H1 (cell line): ENCODE measurements at regions of chr22 and their contacts with region 1.

Region 1: DNA sequence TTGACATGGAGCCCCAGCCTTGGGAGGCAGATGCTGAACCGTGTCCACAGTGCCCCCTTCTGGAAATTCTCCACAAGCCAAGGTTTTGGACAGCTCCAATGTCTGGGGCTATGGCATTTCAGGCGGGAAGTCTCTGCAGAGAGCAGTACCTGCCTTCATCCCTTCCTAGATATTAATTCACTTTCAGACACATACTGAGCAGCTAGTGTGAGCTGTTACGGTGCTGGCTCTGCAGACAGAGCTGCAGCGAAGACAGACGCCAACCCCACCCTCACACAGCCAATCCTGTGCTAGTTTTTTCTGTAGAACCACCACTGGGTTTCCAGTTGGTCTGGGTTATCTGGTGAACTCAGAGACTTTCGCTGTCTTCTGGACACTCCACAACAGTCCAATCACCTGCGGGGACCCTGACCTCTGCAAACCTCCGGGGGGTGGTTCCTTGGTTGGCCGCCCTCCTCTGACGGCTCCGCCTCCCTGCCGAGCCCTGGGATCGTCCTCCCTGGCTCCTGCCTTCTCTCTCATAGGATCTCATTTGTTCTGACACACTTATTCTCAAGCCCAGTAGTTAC is 9.1 kb downstream of the LMF2 start:
- DNase-seq: peak; percentile 56 to 87
- H3K4me3 ChIP-seq: no peak overlapping the region; a peak in 1 of 8 replicates
- H3K27ac ChIP-seq: no peak overlapping the region
- H3K4me1 ChIP-seq: peaks cover 0 to 3% (median 0%) of the 10 kb centered on the region in 4 experiments; a peak in 2 of 7 replicates
- H3K27me3 ChIP-seq: no peaks in the 10 kb centered on the region
- CTCF ChIP-seq: peak; percentile 73 to 93 (median 88)
- EP300 ChIP-seq: no peak
- POLR2A ChIP-seq: no peak
- RAD21 ChIP-seq: peak; percentile 84 to 86

Region 2: GRCh38 chr22:50456466-50457234 is 41.8 kb before region 1 on chr22:
- CTCF ChIA-PET with region 1: interaction called, 21 read pairs
- POLR2A ChIA-PET with region 1: interaction called, 3 read pairs
- DNase-seq: no peak
- H3K4me3 ChIP-seq: no peak overlapping the region
- H3K27ac ChIP-seq: no peak overlapping the region
- H3K4me1 ChIP-seq: no peaks in the 10 kb centered on the region
- H3K27me3 ChIP-seq: no peaks in the 10 kb centered on the region; a peak in 1 of 7 replicates
- CTCF ChIP-seq: peak; percentile 53 to 76 (median 63)
- EP300 ChIP-seq: no peak
- POLR2A ChIP-seq: no peak
- RAD21 ChIP-seq: peak; percentile 56 to 64

Region 3: DNA sequence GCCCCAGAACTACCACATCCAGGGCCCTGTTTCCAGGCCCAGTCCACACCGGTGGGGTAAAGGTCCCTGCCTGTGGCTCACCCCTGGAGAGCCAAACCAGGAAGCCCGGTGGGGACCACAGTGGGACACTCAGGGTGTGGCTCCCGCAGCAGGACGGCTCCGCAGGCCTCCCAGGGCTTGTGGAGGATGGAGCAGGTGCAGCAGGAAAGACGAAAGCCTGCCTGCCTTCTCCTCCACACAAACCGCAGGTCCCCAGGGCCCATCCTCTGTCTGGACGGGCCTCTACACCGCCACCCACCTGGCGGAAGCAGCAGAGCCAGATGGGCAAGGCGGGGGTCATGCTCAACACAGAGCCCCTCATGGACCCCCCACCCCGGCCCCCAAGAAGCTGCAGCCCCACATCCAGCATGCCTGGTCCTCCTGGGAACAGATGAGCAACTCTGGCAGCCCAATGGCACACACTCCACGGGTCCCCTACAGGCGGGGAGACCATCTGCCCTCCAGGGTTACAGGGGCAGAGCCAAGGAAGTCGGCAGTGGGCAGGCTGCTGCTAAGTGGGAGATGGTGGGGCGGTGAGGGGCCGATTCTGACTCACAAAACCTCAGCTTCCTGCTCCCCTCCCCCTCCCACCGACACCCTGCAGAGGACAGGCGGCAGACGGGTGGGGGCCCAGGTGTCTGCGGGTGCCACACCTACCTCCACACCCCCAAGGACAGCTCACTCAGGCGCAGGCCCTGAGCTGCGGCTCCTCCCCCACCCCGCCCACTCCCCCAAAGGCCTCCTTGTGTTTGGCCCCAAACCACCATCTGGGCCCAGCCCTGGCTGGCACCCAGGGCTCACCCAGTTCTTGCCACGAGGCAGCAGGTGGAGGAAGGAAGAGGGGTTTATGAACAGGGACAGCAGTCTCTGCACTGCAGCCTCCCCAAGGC is 28.8 kb before region 1 on chr22:
- CTCF ChIA-PET with region 1: interaction called, 43 read pairs
- POLR2A ChIA-PET with region 1: interaction called, 3 read pairs
- DNase-seq: peak in 1 of 2 experiments; percentile 57
- H3K4me3 ChIP-seq: no peak overlapping the region
- H3K27ac ChIP-seq: no peak overlapping the region; the same call in 1 of the 2 replicates
- H3K4me1 ChIP-seq: peaks cover 0 to 22% (median 13%) of the 10 kb centered on the region in 4 experiments; a peak in 6 of 7 replicates
- H3K27me3 ChIP-seq: no peaks in the 10 kb centered on the region; a peak in 1 of 7 replicates
- CTCF ChIP-seq: no peak
- EP300 ChIP-seq: no peak
- POLR2A ChIP-seq: no peak
- RAD21 ChIP-seq: no peak

Region 4: GRCh38 chr22:50474668-50475492 is 23.5 kb before region 1 on chr22 and contains the start of gene SBF1:
- CTCF ChIA-PET with region 1: interaction called, 43 read pairs
- POLR2A ChIA-PET with region 1: interaction called, 3 read pairs
- DNase-seq: peak in 1 of 2 experiments; percentile 95
- H3K4me3 ChIP-seq: peak within 1 kb of the TSS; percentile 53 to 84 (median 60)
- H3K27ac ChIP-seq: no peak within 1 kb of the TSS; the same call in 1 of the 2 replicates
- H3K4me1 ChIP-seq: peaks cover 0 to 25% (median 16%) of the 10 kb centered on the region in 4 experiments; a peak in 6 of 7 replicates
- H3K27me3 ChIP-seq: peaks cover 1 to 8% (median 3%) of the 10 kb centered on the region in 4 experiments; a peak in 6 of 7 replicates
- CTCF ChIP-seq: 0 out of 4 replicates have a peak, but pooled peaks of 1 of the 3 experiments have one; percentile 6
- EP300 ChIP-seq: no peak
- POLR2A ChIP-seq: no peak; a peak in 1 of 3 replicates
- RAD21 ChIP-seq: no peak
- total RNA-seq, gene SBF1: 68.4 and 71.5 TPM in 2 replicates

Region 5: DNA sequence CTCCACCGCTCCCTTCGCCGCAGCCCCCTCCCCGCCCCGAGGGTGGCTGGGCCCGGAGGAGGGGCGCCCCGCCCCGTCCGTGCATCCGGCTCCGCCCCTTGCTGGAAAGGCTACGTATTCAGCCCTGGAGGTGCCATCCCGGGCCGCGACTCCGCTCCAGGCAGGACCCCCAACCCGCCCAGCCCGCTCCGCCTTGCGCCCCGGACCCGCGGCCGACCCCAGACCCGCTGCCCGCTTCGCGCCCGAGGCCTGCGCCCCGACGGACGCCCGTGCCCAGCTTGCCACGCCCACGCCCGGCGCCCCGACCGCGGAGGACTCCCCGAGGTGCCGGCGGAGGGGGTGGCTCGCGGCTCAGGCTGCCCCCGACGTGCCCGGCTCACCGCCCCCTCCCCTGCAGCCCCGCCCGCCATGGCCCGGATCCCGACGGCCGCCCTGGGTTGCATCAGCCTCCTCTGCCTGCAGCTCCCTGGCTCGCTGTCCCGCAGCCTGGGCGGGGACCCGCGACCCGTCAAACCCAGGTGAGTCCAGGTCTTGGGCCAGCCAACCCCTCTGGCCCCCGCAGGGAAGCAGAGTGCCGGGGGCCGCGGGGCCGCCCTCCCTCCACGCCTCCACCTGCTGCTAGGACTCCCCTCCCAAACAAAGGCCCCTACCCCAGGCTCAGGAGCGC is 16.8 kb before region 1 on chr22 and contains the start of gene ADM2:
- CTCF ChIA-PET with region 1: interaction called, 54 read pairs
- POLR2A ChIA-PET with region 1: interaction called, 21 read pairs
- DNase-seq: peak in 1 of 2 experiments; percentile 89
- H3K4me3 ChIP-seq: peak within 1 kb of the TSS; percentile 50 to 74 (median 58)
- H3K27ac ChIP-seq: no peak within 1 kb of the TSS
- H3K4me1 ChIP-seq: peaks cover 0 to 5% (median 0%) of the 10 kb centered on the region in 4 experiments; a peak in 3 of 7 replicates
- H3K27me3 ChIP-seq: peaks cover 1 to 22% (median 13%) of the 10 kb centered on the region in 4 experiments; a peak in 6 of 7 replicates
- CTCF ChIP-seq: no peak
- EP300 ChIP-seq: no peak
- POLR2A ChIP-seq: no peak; a peak in 1 of 3 replicates
- RAD21 ChIP-seq: no peak
- total RNA-seq, gene ADM2: 7.5 and 8.0 TPM in 2 replicates